GM12878 (cell line): ENCODE measurements at regions of chr3 and their contacts with region 1.

Region 1: GRCh38 chr3:153835540-153835939 is 285.6 kb upstream of the ARHGEF26 start:
- DNase-seq: no peak
- ATAC-seq: peak; percentile 65
- H3K4me3 ChIP-seq: no peak overlapping the region
- H3K27ac ChIP-seq: no peak overlapping the region
- H3K4me1 ChIP-seq: no peaks in the 10 kb centered on the region
- H3K27me3 ChIP-seq: no peaks in the 10 kb centered on the region
- CTCF ChIP-seq: peak in 2 of 3 experiments; percentile 12 to 25; a peak in 3 of 6 replicates
- EP300 ChIP-seq: no peak
- POLR2A ChIP-seq: no peak
- RAD21 ChIP-seq: no peak

Region 2: DNA sequence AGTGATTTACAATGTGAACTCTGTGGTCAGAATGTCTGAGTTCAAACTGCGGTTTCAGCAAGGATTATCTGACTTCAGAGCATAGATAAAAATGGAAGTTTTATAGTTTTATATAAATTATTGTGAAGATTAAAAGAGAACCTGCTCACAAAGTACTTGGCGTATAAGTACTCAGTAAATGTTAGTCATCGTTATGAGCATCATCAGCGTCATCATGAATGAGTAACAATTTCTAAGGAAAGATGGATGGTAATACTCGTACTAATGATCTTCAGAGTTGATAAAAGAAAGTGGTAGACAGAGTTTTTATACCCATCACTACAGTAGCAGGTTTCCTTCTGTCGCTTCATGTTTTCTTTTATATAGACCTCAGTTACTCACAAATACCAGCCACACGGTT is 331.7 kb before region 1 on chr3:
- CTCF ChIA-PET with region 1: no interaction called
- POLR2A ChIA-PET with region 1: no interaction called
- RAD21 ChIA-PET with region 1: no interaction called
- SMC1A ChIA-PET with region 1: no interaction called
- in situ Hi-C with region 1: no loop called
- intact Hi-C with region 1: no loop called
- DNase-seq: no peak
- ATAC-seq: no peak
- H3K4me3 ChIP-seq: no peak overlapping the region
- H3K27ac ChIP-seq: no peak overlapping the region
- H3K4me1 ChIP-seq: no peaks in the 10 kb centered on the region
- H3K27me3 ChIP-seq: no peaks in the 10 kb centered on the region
- CTCF ChIP-seq: no peak
- EP300 ChIP-seq: no peak
- POLR2A ChIP-seq: no peak
- RAD21 ChIP-seq: no peak

Region 3: DNA sequence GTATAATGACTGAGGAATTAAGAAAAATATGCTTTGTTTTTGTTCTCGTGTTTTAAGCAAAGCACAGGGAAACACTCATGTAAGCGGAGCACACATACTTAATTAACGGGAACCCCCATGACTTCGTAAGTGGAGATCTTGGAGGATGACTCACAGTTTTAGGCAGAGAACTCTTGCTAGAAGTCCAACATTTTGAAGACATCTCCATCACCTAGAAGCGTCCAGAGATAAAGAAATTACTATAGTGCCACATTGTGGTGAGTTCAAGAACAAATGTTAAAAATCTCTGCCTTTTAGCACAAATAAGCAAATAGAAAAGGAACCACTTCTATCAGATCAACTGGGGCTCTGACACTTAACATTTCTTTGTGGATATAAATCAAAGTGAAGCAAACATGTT is 91.6 kb after region 1 on chr3:
- CTCF ChIA-PET with region 1: interaction called, 7 read pairs
- POLR2A ChIA-PET with region 1: no interaction called
- RAD21 ChIA-PET with region 1: interaction called, 3 read pairs
- SMC1A ChIA-PET with region 1: interaction called, 10 read pairs
- in situ Hi-C with region 1: no loop called
- intact Hi-C with region 1: no loop called
- DNase-seq: peak; percentile 2
- ATAC-seq: peak; percentile 85
- H3K4me3 ChIP-seq: no peak overlapping the region
- H3K27ac ChIP-seq: no peak overlapping the region
- H3K4me1 ChIP-seq: no peaks in the 10 kb centered on the region
- H3K27me3 ChIP-seq: no peaks in the 10 kb centered on the region
- CTCF ChIP-seq: peak in 1 of 3 experiments; percentile 36; a peak in 2 of 6 replicates
- EP300 ChIP-seq: no peak
- POLR2A ChIP-seq: no peak
- RAD21 ChIP-seq: no peak